MCF 10A (cell line): ENCODE measurements at regions of chr2 and their contacts with region 1.

Region 1: DNA sequence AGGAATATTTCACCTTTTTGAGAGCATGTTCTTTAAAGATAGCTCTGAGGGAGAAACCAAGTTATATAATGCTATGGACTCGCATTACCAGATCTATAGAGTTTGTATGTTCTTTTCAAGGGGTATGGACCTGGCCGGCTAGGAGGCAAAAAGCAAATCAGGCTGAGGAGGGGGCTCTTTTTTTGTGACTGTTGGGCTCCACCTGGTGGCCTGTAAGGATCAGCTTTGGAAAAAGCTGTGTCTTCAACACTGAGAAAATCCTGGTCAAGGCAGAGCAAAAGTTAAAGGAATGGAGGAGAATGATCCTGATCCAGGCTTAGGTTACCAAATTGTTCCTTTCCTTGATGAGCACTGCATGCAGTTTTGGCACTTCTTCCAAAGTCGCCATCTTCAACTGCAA is 180.5 kb downstream of the DIS3L2 start:
- DNase-seq: peak; percentile 46
- H3K4me3 Mint-ChIP-seq: no peak overlapping the region
- H3K27ac Mint-ChIP-seq: no peak overlapping the region
- H3K4me1 Mint-ChIP-seq: no peaks in the 10 kb centered on the region
- H3K27me3 Mint-ChIP-seq: no peaks in the 10 kb centered on the region
- CTCF ChIP-seq: peak; percentile 71

Region 2: GRCh38 chr2:231854671-231855070 is 287.4 kb before region 1 on chr2:
- CTCF ChIA-PET with region 1: interaction called, 3 read pairs
- POLR2A ChIA-PET with region 1: no interaction called
- intact Hi-C with region 1: loop called (anchors 5 kb)
- DNase-seq: peak; percentile 49
- H3K4me3 Mint-ChIP-seq: no peak overlapping the region
- H3K27ac Mint-ChIP-seq: no peak overlapping the region
- H3K4me1 Mint-ChIP-seq: no peaks in the 10 kb centered on the region
- H3K27me3 Mint-ChIP-seq: peaks cover 22% of the 10 kb centered on the region
- CTCF ChIP-seq: no peak

Region 3: DNA sequence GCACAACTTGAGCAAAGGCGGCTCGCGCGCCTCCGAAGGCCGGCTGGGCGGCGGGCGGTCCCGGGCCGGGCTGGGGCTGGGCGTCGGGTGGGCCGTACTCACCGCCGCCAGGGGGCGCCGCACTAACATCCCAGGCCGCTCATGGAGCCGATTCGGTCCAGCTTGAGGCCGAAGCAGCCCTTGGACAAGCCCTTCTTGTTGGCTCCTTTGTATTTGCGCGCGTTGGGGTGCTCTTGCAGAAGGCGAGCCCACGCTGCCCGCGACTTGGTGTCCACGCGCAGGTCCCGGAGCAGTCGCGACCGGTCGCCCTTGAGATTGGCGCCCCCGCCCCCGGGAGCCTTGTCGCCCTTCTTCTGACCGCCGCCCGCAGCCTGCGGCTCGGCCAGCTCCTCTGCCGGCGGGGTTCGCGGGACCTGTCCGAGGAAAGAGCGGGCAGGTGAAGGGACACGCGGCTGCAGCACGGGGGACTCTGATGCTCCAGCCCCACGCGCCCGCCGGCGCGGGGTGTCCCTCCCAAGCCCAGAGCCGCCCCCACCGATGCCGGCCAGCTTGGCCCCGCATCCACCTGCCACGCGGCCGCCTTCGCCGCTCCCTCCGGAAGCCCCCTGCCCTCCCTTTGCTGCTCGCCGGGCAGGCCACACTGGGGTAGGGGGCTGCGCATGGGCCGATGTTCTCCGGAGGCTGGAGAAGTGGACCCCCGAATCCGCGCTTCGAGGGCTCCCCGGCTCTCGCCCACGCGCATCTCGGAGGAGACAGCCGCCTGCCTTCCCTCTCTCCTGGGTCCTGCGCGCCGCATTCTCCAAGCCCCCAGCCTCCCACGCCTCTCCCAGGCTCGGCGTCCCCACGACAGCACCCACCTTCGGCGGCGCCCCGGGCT is 216.5 kb before region 1 on chr2:
- CTCF ChIA-PET with region 1: interaction called, 78 read pairs
- POLR2A ChIA-PET with region 1: interaction called, 3 read pairs
- intact Hi-C with region 1: no loop called
- DNase-seq: peak; percentile 85
- H3K4me3 Mint-ChIP-seq: peak overlapping the region; percentile 60
- H3K27ac Mint-ChIP-seq: no peak overlapping the region
- H3K4me1 Mint-ChIP-seq: no peaks in the 10 kb centered on the region
- H3K27me3 Mint-ChIP-seq: peaks cover 63% of the 10 kb centered on the region
- CTCF ChIP-seq: peak; percentile 91

Region 4: GRCh38 chr2:232126301-232127099 is 15.5 kb before region 1 on chr2:
- CTCF ChIA-PET with region 1: interaction called, 10 read pairs
- POLR2A ChIA-PET with region 1: interaction called, 3 read pairs
- intact Hi-C with region 1: no loop called
- DNase-seq: no peak
- H3K4me3 Mint-ChIP-seq: no peak overlapping the region
- H3K27ac Mint-ChIP-seq: no peak overlapping the region
- H3K4me1 Mint-ChIP-seq: no peaks in the 10 kb centered on the region
- H3K27me3 Mint-ChIP-seq: no peaks in the 10 kb centered on the region
- CTCF ChIP-seq: no peak

Region 5: DNA sequence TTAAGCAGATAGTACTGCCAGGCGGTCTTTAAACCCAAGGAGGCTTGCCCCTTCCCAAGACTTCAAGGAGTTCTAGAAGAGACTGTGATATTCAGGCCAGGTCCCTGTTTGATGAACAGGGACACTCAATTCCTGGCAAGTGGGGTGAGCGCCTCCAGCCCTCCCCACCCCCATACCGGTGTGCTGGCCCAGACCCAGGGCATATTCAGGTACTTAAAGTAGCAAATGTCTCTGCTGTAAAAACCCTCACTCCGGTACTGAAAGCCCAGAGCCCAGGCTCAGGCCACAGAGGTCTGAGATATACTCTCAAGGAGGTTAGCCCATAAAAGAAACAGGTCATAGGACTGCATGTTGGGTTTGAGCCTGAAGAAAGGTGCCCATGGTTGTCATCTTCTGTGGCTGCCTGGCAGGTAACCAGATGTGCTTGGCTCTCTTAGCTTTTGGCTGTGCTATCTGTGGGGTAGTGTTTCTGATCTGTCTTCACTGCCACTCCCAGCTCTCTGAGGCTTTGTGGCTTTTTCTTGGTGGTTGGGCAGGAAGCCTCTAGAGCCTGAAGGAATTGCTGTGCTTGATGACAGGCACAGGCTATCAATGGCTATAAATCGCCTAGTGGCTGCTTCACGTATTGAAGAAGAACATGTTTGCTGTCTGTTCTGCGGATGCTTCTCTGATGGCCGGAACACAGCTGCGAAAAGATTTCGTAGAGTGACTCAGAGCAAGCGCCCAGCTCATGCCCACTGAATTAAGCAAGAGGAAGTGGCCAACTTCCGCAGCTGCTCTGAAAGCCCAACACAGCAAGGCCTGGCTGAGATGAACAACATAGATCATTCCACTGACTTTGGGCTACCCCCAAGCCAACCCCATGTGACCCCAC is 173.2 kb after region 1 on chr2:
- CTCF ChIA-PET with region 1: no interaction called
- POLR2A ChIA-PET with region 1: no interaction called
- intact Hi-C with region 1: loop called (anchors 10 kb)
- DNase-seq: peak; percentile 93
- H3K4me3 Mint-ChIP-seq: peak overlapping the region; percentile 25
- H3K27ac Mint-ChIP-seq: peak overlapping the region; percentile 94
- H3K4me1 Mint-ChIP-seq: peaks cover 20% of the 10 kb centered on the region
- H3K27me3 Mint-ChIP-seq: no peaks in the 10 kb centered on the region
- CTCF ChIP-seq: peak; percentile 29